Activated T-helper 2 cell treated with anti-CD3 and anti-CD28 coated beads, Interferon-gamma antibody, Interleukin-2, Interleukin-4, amounts not matched to agents 10 μg/mL and 5 μg/mL and 100 μg/mL, durations not matched to agents 14 hours and 24 hours and 36 hours (primary cell): ENCODE measurements at regions of chr5 and their contacts with region 1.

Region 1: GRCh38 chr5:150449517-150450339 is at the start of gene RPS14:
- DNase-seq: peak; percentile 91
- H3K4me3 Mint-ChIP-seq: peak within 1 kb of the TSS; percentile 99
- H3K27ac Mint-ChIP-seq: peak within 1 kb of the TSS; percentile 100
- H3K4me1 Mint-ChIP-seq: peaks cover 23% of the 10 kb centered on the region
- H3K27me3 Mint-ChIP-seq: no peaks in the 10 kb centered on the region
- total RNA-seq, gene RPS14: 2,552 and 2,593 TPM in 2 replicates

Region 2: GRCh38 chr5:150066901-150067396 is 382.8 kb before region 1 on chr5:
- intact Hi-C with region 1: no loop called
- DNase-seq: no peak
- H3K4me3 Mint-ChIP-seq: no peak overlapping the region
- H3K27ac Mint-ChIP-seq: peak overlapping the region; percentile 46
- H3K4me1 Mint-ChIP-seq: peaks cover 22% of the 10 kb centered on the region
- H3K27me3 Mint-ChIP-seq: peaks cover 1% of the 10 kb centered on the region

Region 3: DNA sequence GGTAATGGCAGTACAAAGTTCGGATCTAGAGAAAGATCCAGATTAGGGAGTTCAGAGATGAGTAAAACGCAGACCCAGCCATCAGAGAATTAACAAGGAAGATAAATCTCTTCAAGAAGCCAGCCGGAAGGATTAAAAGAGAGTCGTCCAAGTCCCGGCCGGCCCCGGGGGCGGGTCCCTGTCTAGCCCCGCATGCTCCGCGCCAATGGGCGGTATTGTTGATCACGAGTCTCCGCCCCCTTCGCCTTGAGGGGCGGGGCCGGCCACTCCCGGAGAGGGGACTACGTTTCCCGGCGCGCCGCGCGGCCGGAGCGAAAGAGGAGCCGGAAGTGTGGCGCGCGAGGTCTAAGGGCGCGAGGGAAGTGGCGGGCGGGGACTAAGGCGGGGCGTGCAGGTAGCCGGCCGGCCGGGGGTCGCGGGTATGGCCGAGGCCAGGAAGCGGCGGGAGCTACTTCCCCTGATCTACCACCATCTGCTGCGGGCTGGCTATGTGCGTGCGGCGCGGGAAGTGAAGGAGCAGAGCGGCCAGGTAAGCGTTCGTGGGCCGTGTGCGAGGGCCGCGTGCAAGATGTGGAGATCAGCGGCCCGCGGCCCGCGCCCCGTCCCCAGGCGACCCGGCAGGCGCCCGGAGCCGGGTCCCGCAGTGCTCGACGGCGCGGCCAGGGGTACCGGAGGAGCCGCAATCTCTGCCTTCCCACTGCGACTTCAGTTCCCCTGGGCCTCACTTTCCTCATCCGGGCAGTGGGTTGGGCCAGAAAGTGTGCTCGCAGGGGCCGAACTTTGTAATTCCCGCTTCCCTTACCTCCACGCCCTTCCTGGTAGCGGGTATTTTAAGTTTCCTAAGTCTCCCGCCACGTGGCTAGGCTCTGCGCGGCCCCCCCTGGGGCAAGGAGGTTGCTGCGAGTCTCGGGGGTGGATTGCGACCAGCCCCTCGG is 92.1 kb before region 1 on chr5 and contains the start of gene TCOF1:
- intact Hi-C with region 1: loop called (anchors 1 kb)
- DNase-seq: peak; percentile 96
- H3K4me3 Mint-ChIP-seq: peak within 1 kb of the TSS; percentile 87
- H3K27ac Mint-ChIP-seq: peak within 1 kb of the TSS; percentile 85
- H3K4me1 Mint-ChIP-seq: peaks cover 32% of the 10 kb centered on the region
- H3K27me3 Mint-ChIP-seq: peaks cover 4% of the 10 kb centered on the region
- total RNA-seq, gene TCOF1: 95.8 and 98.2 TPM in 2 replicates

Region 4: GRCh38 chr5:150412319-150413175 is 37.2 kb before region 1 on chr5 and contains the start of gene CD74:
- intact Hi-C with region 1: loop called (anchors 1 kb)
- DNase-seq: peak; percentile 90
- H3K4me3 Mint-ChIP-seq: peak within 1 kb of the TSS; percentile 88
- H3K27ac Mint-ChIP-seq: peak within 1 kb of the TSS; percentile 94
- H3K4me1 Mint-ChIP-seq: peaks cover 27% of the 10 kb centered on the region
- H3K27me3 Mint-ChIP-seq: no peaks in the 10 kb centered on the region
- total RNA-seq, gene CD74: 445 and 452 TPM in 2 replicates

Region 5: GRCh38 chr5:150428106-150428876 is 21.4 kb before region 1 on chr5:
- intact Hi-C with region 1: no loop called
- DNase-seq: no peak
- H3K4me3 Mint-ChIP-seq: no peak overlapping the region
- H3K27ac Mint-ChIP-seq: no peak overlapping the region
- H3K4me1 Mint-ChIP-seq: no peaks in the 10 kb centered on the region
- H3K27me3 Mint-ChIP-seq: peaks cover 5% of the 10 kb centered on the region

Region 6: DNA sequence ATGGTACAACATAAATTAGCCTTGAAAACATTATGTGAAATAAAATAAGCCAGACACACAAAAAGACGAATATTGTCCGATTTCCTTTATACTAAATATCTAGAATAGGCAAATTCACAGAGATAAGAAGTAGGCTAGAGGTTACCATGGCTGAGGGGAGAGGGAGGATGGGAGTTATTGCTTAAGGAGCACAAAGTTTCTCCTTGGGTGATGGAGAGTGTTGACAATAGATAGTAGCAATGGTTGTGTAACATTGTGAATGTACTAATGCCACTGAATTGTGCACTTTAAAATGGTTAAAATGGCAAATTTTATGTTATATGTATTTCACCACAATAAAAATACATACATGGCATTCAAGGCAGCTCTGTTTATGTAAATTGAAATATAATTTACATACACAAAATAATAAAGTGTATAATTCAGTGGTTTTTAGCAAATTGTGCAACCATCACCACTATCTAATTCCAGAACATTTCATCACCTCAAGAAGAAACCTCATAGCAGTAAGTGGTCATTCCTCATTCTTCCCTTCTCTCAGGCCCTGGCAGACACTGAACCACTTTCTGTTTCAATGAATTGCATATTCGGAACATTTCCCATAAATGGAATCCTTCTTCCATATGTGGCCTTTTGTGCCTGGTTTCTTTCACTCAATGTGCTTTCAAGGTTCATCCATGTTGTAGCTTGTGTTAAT is 117.4 kb after region 1 on chr5:
- intact Hi-C with region 1: no loop called
- DNase-seq: no peak
- H3K4me3 Mint-ChIP-seq: no peak overlapping the region
- H3K27ac Mint-ChIP-seq: no peak overlapping the region
- H3K4me1 Mint-ChIP-seq: no peaks in the 10 kb centered on the region
- H3K27me3 Mint-ChIP-seq: no peaks in the 10 kb centered on the region

Region 7: GRCh38 chr5:150656191-150657132 is 206.7 kb after region 1 on chr5:
- intact Hi-C with region 1: loop called (anchors 10 kb)
- DNase-seq: peak; percentile 77
- H3K4me3 Mint-ChIP-seq: peak overlapping the region; percentile 77
- H3K27ac Mint-ChIP-seq: no peak overlapping the region
- H3K4me1 Mint-ChIP-seq: peaks cover 6% of the 10 kb centered on the region
- H3K27me3 Mint-ChIP-seq: peaks cover 12% of the 10 kb centered on the region